ENCODE measurements at regions of chr16 and their contacts with region 1.

Region 1: DNA sequence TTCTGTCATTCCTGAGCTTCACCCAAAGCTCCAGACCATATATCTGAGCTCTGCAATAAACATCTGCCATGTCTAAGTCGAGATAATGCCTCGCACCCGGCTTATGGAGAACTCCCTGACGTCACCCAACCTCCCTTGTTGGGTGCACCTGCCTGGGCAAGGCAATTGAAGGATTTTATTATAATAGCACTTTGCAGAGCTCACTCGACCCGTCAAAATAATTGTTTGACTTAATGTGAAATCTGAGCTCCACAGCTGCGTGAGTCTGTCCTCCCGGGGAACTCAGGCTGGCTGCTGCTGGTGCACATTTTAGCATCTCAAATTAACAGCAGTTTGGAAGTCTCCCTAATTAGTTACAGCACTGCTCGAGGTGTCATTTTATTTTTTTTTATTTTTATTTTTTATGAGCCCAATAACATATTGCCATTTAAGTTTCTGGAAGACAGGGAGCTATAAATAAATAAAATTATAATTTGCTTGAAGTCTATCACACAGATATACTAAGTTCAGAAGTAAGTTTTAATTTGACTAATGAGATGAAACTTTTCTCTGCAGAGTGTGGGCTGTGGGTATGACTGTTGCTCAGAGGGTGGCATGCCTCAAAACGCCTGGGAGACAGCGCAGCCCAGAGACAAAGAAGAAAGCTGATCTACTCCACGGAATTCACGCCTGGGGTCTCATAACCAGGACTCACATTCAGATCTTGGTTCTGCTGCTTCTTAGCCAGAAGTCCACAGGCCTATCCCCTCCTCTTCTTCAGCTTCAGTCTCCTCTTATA is 401.4 kb upstream of the C16orf82 start:
- DNase-seq: peak; percentile 41
- H3K4me3 Mint-ChIP-seq: no peak overlapping the region
- H3K27ac Mint-ChIP-seq: no peak overlapping the region
- H3K4me1 Mint-ChIP-seq: peaks cover 8% of the 10 kb centered on the region
- H3K27me3 Mint-ChIP-seq: peaks cover 16% of the 10 kb centered on the region

Region 2: DNA sequence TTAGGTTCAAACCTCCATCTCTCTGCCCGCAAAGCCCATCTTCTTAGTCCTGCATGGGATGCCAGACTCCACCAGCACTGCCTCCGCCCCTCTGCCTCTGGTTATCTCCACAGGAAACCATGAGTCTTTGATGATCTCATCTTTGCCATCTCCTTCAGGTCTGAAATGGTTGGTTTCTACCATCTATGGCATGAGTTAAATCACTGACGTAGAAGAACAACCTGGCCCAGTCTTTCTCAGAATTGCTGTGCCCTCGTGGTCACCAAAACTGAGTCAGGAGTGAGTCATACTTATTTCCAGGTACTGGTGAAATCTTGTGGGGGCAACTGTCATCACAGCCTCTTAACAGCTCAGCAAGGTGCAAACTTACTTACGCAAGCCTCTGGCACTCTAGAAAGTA is 67.3 kb before region 1 on chr16:
- CTCF ChIA-PET with region 1: no interaction called
- POLR2A ChIA-PET with region 1: no interaction called
- intact Hi-C with region 1: loop called (anchors 5 kb)
- DNase-seq: peak; percentile 82
- H3K4me3 Mint-ChIP-seq: no peak overlapping the region
- H3K27ac Mint-ChIP-seq: peak overlapping the region; percentile 89
- H3K4me1 Mint-ChIP-seq: peaks cover 37% of the 10 kb centered on the region
- H3K27me3 Mint-ChIP-seq: peaks cover 18% of the 10 kb centered on the region

Measured in activated CD4-positive, alpha-beta memory T cell treated with anti-CD3 and anti-CD28 coated beads for 36 hours (primary cell).